Left colon (tissue), 2 donors: ENCODE measurements at regions of chr7 and their contacts with region 1.

Region 1: DNA sequence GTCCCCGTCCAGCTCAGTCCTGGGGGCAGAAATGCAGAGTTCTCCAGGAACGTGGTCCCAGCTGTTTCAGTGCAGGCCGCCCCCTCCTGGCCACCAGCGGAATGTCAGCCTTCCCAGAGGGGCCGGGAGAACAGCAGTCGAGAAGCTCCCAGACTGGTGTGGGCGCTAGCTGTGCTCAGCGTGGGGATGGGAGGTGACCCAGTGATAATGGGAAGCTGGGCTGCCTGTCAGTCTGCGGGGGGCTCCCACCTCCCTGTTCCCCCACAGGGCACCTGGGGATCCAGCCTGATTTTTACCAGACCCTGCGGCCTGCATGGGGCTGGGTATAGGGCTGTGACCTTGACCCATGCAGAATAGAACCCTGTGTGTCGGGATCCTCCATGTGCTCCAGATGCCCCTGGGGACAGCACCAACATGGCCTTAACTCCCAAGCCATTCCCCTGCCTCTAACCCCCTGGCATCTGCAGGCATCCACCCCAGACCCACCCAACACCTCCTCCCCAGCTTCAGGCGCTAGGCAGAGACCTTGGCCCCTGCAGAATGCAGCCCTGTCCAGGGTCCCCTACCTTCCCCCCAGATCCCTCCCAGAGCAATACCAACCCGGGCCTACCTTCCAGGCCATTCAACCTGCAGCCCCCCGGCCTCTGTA is 946 bp upstream of the ELN start:
- DNase-seq: peak; percentile 65 to 80
- ATAC-seq: peak; percentile 81

Region 2: GRCh38 chr7:73885975-73886798 is 140.8 kb before region 1 on chr7:
- intact Hi-C with region 1: loop called in 1 of 2 experiments (anchors 10 kb)
- DNase-seq: no peak
- ATAC-seq: no peak